Posterior vena cava (tissue), 2 donors: ENCODE measurements at regions of chr3 and their contacts with region 1.

Region 1: DNA sequence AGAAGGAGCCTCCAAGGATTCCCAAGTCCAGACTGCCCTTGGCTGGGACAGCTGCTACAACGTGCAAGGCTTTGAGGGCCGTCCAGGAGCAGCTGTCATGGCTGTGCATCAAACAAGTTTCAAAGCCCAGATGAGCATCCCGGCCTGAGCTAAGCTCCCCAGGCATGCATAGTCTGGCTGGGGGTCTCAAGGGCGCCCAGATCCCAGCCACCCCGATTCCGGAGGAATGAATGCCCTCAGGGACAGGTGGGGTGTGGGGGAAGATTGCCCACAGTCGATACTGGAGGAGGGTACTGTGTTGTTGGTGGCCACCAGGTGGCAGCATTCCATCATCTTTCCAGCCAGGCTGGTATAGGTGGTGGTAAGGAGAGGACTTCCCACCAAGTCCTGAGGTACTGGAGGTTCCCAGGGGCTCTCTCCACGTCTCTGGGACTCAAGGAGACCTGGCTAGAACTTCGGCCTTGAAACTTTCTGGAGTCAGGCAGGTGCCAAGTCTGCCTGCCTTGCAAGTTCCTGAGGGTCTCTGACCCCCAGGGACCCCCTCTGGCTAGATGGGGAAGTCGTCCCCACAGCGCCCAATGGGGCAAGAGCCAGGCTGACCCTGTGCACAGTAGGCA is 32.8 kb downstream of the RBM5 start:
- DNase-seq: peak; percentile 91

Region 2: GRCh38 chr3:50192689-50193141 is 71.2 kb after region 1 on chr3:
- intact Hi-C with region 1: loop called (anchors 1 to 2 kb)
- DNase-seq: peak; percentile 92

Region 3: GRCh38 chr3:50292159-50293078 is 170.9 kb after region 1 on chr3 and contains the start of gene IFRD2:
- intact Hi-C with region 1: no loop called
- DNase-seq: peak; percentile 100
- total RNA-seq, gene IFRD2: 47.3 to 53.3 TPM

Region 4: DNA sequence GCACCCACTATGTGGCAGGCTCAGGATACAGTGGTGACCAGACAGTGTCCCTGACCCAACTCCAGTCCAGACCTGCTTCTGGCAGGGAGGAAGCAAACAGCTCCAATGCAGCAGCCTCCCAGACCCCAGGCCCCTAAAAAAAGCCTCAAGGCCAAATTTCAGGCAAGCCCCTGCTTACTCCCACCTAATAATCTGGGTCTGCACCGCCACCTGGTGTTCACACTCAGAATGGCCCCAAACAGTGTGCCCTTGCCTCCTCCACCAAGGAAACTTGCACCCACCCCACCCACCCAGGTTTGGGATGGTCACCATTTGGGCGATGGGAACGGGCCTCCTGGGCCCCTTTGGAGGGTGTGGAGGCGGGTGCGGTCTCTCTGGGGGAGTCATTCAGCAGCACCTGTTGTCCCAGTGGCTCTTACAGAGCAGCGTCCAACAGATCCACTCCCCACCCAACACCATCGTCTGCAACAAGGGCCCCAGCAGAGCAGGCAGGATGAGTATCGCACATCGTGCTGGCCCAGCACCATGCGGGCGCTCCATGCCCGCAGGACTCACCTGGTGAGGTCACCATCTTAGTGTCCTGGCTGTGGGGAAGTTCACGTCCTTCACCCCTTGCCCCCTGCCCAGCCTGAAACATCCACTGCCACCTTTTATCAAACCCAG is 428.7 kb after region 1 on chr3:
- intact Hi-C with region 1: no loop called
- DNase-seq: no peak